HepG2 (cell line): ENCODE measurements at regions of chr3 and their contacts with region 1.

Region 1: GRCh38 chr3:131033480-131034080 is 6.9 kb downstream of the NEK11 start:
- DNase-seq: peak; percentile 43
- ATAC-seq: peak; percentile 55; the same call in 2 of the 3 replicates
- H3K4me3 ChIP-seq: no peak overlapping the region
- H3K27ac ChIP-seq: no peak overlapping the region
- H3K4me1 ChIP-seq: no peaks in the 10 kb centered on the region
- H3K27me3 ChIP-seq: no peaks in the 10 kb centered on the region
- CTCF ChIP-seq: peak; percentile 67
- EP300 ChIP-seq: no peak
- POLR2A ChIP-seq: no peak
- RAD21 ChIP-seq: no peak

Region 2: GRCh38 chr3:130997291-130997690 is 36.3 kb before region 1 on chr3:
- CTCF ChIA-PET with region 1: no interaction called
- POLR2A ChIA-PET with region 1: no interaction called
- in situ Hi-C with region 1: no loop called
- intact Hi-C with region 1: no loop called
- DNase-seq: no peak
- ATAC-seq: no peak
- H3K4me3 ChIP-seq: no peak overlapping the region
- H3K27ac ChIP-seq: no peak overlapping the region
- H3K4me1 ChIP-seq: no peaks in the 10 kb centered on the region
- H3K27me3 ChIP-seq: no peaks in the 10 kb centered on the region
- CTCF ChIP-seq: no peak
- EP300 ChIP-seq: no peak
- POLR2A ChIP-seq: no peak
- RAD21 ChIP-seq: no peak

Region 3: GRCh38 chr3:131020122-131020693 is 13.4 kb before region 1 on chr3:
- CTCF ChIA-PET with region 1: no interaction called
- POLR2A ChIA-PET with region 1: no interaction called
- in situ Hi-C with region 1: no loop called
- intact Hi-C with region 1: no loop called
- DNase-seq: no peak
- ATAC-seq: no peak
- H3K4me3 ChIP-seq: no peak overlapping the region
- H3K27ac ChIP-seq: no peak overlapping the region
- H3K4me1 ChIP-seq: peaks cover 4% of the 10 kb centered on the region
- H3K27me3 ChIP-seq: no peaks in the 10 kb centered on the region
- CTCF ChIP-seq: no peak
- EP300 ChIP-seq: no peak
- POLR2A ChIP-seq: no peak
- RAD21 ChIP-seq: no peak

Region 4: DNA sequence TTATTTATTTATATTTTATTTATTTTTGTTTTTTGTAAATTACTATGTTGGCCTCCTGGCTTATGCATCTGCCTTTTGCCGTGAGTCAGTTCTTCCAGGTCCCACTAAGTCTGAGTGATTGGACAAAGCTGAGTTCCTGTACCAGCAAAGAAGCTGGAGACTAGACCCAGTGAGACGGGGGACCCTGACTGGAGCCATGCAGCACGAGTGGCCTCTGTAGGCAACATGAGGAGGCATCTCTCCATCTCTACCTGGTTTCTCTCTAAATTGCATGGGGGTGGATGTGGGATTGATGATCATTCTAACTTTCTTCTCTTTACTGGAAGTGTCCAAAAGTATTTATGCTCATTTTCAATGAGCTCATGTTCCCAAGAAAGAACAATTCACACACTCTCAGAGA is 624.5 kb after region 1 on chr3:
- CTCF ChIA-PET with region 1: no interaction called
- POLR2A ChIA-PET with region 1: no interaction called
- in situ Hi-C with region 1: no loop called
- intact Hi-C with region 1: loop called (anchors 10 kb)
- DNase-seq: peak; percentile 4
- ATAC-seq: peak; percentile 60
- H3K4me3 ChIP-seq: no peak overlapping the region
- H3K27ac ChIP-seq: no peak overlapping the region
- H3K4me1 ChIP-seq: no peaks in the 10 kb centered on the region
- H3K27me3 ChIP-seq: no peaks in the 10 kb centered on the region
- CTCF ChIP-seq: peak; percentile 44
- EP300 ChIP-seq: no peak
- POLR2A ChIP-seq: no peak
- RAD21 ChIP-seq: no peak

Region 5: DNA sequence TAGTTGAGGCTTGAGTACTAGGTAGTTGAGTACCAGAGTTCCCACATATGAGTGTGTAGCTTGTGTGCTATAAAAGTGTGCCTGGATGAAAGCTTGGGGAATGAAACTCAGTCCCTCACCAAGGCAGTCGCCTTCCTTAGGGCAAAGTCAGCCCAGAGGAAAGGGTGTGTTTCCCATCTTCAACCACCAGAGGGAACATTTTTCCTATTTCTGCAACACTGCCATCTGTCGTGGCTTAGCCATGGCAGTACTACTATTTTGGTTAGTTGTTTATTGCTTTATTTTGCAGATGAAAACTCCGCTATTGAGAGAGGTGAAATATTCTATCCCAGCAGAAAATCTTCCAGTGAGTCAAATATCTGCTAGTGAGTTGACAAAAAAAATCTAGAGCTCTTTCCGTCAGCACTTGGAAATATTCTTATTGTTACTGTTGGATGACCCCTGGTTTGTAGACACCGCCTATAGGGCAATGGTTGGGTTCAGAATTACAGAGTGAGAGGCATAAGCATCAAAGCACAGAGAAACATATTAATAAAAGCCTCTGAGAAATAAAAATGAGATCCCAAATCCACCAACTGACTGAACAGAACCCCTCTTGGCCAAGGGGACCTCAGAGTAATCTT is 761.3 kb after region 1 on chr3:
- CTCF ChIA-PET with region 1: interaction called, 4 read pairs
- POLR2A ChIA-PET with region 1: no interaction called
- in situ Hi-C with region 1: no loop called
- intact Hi-C with region 1: loop called (anchors 10 kb)
- DNase-seq: peak; percentile 24
- ATAC-seq: peak; percentile 88
- H3K4me3 ChIP-seq: no peak overlapping the region
- H3K27ac ChIP-seq: no peak overlapping the region
- H3K4me1 ChIP-seq: no peaks in the 10 kb centered on the region
- H3K27me3 ChIP-seq: no peaks in the 10 kb centered on the region
- CTCF ChIP-seq: peak; percentile 79
- EP300 ChIP-seq: no peak
- POLR2A ChIP-seq: no peak
- RAD21 ChIP-seq: peak; percentile 38; the same call in 1 of the 2 replicates

Region 6: DNA sequence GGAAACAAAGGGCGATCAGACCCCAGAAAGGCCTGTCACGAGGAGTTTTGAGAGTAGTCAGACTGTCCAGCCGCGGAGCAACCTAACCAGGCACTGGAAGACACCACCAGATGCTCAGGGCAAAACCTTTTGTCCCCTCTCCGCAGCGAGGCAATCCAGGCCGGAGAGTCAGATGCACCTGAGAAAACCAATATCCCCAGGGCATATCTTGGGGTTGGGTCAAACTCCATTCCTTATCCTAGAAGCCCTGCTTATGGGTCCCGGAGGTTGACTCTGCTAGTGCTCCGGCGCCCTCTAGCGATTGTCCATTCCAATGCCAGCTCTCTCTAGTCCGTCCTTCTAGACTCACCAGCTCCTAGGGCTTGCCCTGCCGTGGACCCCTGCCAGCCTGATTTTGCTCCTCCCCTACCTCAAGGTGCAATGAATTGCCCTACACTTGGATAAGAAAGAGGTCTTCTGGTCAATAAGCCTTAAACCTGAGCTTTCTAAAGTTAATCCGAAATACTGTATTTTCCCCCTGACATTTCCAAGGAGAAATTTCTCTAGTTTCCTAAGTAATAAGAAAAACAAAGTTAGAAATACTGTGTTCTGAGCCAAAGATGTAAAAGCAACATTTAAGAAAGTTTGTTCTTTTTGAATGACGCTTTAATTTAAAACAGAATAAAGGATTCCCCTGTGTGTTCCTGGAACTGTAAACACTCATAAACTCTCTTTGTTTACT is 995.8 kb after region 1 on chr3:
- CTCF ChIA-PET with region 1: no interaction called
- POLR2A ChIA-PET with region 1: no interaction called
- in situ Hi-C with region 1: loop called (anchors 25 kb)
- intact Hi-C with region 1: loop called (anchors 2 kb)
- DNase-seq: peak; percentile 53
- ATAC-seq: peak; percentile 99
- H3K4me3 ChIP-seq: no peak overlapping the region
- H3K27ac ChIP-seq: no peak overlapping the region
- H3K4me1 ChIP-seq: no peaks in the 10 kb centered on the region
- H3K27me3 ChIP-seq: peaks cover 0 to 5% of the 10 kb centered on the region in 2 experiments; a peak in 1 of 5 replicates
- CTCF ChIP-seq: peak; percentile 90
- EP300 ChIP-seq: no peak
- POLR2A ChIP-seq: no peak
- RAD21 ChIP-seq: peak; percentile 68